ENCODE measurements at regions of chr17 and their contacts with region 1.

Region 1: GRCh38 chr17:63919311-63919723 is 678 bp upstream of the GH1 start:
- DNase-seq: peak; percentile 80

Region 2: GRCh38 chr17:63929860-63930766 is 10.8 kb after region 1 on chr17:
- CTCF ChIA-PET with region 1: interaction called, 17 read pairs
- POLR2A ChIA-PET with region 1: no interaction called
- DNase-seq: no peak

Region 3: DNA sequence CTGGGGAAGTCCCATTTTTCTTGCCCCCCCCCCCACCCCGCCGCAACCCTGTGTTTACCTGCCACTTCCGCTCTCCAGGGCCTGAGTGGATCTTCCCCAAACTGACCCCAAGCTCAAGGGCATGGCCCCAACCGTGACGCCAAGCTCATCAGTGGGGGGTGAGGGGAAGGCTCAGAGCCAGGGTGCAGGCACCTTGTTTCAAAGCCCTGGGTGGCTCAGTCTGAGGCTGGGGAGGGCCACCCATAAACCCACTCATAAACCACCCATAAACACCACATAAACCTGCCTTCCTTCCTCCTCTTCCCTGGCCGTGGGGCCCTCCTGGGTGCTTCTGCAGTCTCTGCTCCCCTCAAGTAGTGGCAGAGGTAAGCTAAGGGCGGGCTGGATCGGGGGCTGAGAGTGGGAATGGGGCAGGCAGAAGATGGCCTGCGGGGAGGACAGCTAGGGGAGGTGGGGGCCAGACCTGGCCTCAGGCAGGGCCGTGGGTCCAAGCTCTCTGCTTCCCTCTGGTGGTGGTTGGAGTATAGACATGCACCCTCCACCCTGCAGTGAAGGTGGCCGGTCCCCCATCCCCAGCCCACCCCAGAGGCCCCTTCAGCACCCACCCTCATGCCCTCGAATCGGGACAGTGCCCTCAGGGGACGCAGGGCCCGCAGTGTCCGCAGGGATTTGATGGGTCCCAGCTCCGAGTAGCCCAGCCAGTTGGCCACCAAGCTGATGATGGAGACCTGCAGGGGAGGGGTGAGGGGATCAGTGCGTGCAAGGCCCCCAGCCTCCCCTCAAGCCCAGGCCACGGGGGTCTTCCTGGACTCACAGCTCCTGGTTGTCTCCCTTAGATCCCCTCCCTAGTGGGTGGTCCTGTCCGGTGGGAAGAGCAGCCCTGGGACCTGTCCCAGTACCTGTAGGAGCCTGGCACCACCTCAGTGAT is 27.4 kb after region 1 on chr17:
- CTCF ChIA-PET with region 1: interaction called, 27 read pairs
- POLR2A ChIA-PET with region 1: no interaction called
- DNase-seq: peak; percentile 90

Region 4: DNA sequence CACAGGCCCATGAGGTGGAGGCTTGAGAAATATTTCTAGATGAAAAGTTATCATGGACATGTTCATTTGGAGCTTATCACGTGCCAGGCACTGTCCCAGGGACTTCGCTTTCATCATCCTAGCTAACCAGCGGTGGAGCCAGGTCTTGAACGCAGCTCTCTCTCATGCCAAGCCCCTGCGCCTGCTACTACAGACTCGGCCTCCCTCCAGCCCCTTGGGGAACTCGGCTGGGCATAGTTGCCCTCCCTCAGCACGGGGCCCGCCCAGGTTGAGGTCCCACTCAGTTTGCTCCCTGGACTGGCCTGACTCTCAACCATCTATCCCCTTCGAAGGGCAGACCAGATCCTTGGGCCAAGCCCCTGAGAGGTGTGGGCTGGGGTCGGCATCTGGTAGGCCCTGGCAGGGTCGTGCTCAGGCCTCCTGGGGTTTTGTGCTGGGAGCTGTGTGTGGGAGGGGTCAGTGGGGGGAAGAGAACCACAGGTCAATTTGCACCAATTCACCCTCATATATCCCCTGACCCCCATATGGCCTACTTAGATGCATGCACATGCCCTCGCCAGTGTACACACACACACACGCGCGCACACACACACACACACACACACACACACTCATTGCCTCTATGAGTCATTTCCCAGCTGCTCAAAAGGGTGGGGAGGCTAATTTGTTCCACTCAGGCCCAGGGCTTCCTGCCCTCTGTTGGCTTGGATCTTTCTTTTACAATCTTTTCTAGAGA is 65.5 kb after region 1 on chr17:
- CTCF ChIA-PET with region 1: interaction called, 21 read pairs
- POLR2A ChIA-PET with region 1: no interaction called
- DNase-seq: no peak

Region 5: DNA sequence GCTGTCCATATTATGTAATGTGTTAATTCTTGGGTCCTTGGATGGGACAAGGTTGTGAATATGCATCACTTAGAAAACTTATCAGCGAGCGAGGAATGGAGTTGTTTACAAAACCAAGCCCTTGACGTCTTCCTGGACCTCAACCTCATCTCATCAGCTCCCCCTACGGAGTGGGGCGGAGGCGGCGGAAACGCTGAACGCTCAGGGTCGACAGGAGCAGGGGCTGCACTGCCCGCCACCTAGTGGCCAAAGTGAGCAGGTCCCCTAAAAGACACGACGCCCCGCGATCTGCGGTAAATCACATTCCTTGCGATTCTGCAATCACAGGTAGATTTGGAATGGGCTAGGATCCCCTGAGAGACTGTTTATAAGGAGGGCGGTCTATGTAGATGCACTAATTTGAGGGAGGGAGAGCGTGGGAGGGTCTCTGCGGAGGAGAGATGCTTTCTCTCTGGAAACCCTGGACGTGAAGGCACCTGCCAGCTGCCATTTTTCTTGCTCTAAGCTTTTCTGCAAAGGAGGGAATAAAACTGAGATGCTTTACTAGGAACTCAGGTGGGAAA is 106.5 kb after region 1 on chr17:
- CTCF ChIA-PET with region 1: interaction called, 14 read pairs
- POLR2A ChIA-PET with region 1: interaction called, 5 read pairs
- DNase-seq: peak; percentile 93

Measured in HEK293T (cell line).